ENCODE measurements at regions of chr3 and their contacts with region 1.

Region 1: GRCh38 chr3:195838714-195839113 is 27.0 kb upstream of the MUC4 start:
- DNase-seq: no peak

Region 2: DNA sequence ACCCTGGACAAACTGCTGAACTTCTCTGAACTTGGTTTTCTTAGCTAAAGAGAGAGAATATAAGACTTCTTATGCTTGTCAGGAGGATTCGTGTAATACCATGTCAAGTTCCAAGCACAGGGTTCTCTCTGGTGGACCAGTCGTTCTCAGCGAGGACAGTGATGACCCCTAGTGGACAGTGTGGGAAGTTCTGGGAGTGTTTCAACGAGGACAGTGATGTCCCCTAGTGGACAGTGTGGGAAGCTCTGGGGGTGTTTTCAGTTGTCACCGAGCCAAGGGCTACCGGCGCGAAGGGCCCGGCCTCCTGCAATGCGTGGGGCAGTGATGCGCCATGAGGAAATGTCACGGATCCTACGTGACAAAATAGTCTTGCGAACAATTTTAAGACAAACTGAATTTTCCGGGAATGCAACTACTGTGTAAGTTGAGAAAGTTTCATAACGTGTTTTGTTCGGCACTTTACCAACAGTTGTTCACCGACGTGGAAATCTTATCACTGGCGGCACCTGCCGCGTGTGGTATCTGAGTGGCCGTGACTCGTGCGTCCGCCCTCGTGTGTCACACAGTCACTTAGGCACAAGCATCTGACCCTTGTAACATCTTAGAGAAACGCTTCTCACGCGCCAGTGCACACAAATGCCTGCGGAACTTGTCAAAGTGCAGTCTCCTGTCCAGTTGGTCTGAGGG is 12.3 kb after region 1 on chr3:
- intact Hi-C with region 1: loop called in 1 of 2 experiments (anchors 1 kb)
- DNase-seq: peak; percentile 90